ENCODE measurements at regions of chr13 and their contacts with region 1.

Region 1: GRCh38 chr13:20019043-20019442 is 60.5 kb downstream of the ZMYM2 start:
- DNase-seq: no peak
- ATAC-seq: peak; percentile 61
- H3K4me3 Mint-ChIP-seq: no peak overlapping the region
- H3K27ac Mint-ChIP-seq: no peak overlapping the region
- H3K4me1 Mint-ChIP-seq: peaks cover 23% of the 10 kb centered on the region
- H3K27me3 Mint-ChIP-seq: no peaks in the 10 kb centered on the region

Region 2: DNA sequence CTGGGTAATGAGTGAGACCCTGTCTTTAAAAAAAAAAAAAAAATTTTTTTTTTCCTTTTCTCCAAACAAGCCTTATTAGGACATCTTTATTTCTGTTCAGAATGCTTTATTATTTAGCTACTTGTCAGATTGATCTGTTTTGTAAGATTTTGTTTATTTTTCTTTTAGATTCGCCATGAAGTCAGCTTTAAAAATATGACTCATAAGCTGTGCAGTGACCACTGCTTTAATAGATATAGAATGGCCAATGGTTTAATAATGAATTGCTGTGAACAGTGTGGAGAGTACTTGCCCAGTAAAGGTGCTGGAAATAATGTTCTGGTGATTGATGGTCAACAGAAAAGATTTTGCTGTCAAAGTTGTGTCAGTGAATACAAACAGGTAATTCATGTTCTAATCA is 12.8 kb before region 1 on chr13:
- CTCF ChIA-PET with region 1: no interaction called
- POLR2A ChIA-PET with region 1: no interaction called
- intact Hi-C with region 1: no loop called
- DNase-seq: no peak
- ATAC-seq: no peak
- H3K4me3 Mint-ChIP-seq: no peak overlapping the region
- H3K27ac Mint-ChIP-seq: no peak overlapping the region
- H3K4me1 Mint-ChIP-seq: peaks cover 8% of the 10 kb centered on the region
- H3K27me3 Mint-ChIP-seq: no peaks in the 10 kb centered on the region

Region 3: DNA sequence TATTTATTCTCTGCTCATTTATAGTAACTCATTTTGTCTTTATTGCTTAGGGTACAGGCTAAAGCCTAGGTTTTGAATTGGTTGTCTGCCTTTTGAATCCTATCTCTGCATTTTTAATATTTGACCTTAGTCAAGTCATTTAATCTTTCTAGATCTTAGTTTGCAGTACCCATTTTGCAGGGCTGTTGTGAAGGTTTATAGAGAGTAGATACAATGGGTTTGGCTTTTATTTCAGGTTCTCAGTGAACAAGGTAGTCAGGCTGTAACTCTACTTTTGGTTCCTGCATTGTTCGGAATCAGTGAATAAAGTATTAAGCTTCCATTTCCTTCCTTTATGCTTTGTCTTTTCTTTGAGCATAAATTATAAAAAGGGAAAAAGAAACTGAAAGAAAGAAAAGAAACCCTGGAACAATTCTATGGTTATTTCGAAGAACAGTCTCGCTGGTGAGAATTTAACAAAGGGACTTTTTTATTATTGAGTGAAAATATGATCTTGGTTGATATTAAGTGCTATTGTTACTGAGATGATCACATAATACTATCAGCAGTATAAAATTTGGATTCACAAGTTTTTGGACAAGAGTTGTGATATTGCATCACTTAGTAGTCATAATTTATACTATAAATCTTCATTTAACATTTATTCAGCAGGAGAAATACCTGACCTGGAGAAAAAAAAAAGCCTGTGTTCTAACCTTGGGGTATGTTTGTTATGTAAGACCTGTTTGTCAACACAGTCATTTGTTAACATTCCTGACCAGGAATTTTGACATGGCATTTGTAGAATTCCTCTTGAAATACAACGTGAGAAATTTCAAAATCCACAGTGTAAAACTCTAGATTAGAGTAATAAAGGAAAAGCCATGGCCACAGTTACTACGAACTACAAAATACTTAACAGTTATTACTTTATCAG is 30.8 kb after region 1 on chr13:
- CTCF ChIA-PET with region 1: no interaction called
- POLR2A ChIA-PET with region 1: no interaction called
- intact Hi-C with region 1: loop called in 1 of 2 experiments (anchors 2 kb)
- DNase-seq: no peak
- ATAC-seq: peak; percentile 79
- H3K4me3 Mint-ChIP-seq: peak overlapping the region; percentile 21
- H3K27ac Mint-ChIP-seq: peak overlapping the region; percentile 11
- H3K4me1 Mint-ChIP-seq: peaks cover 19% of the 10 kb centered on the region
- H3K27me3 Mint-ChIP-seq: no peaks in the 10 kb centered on the region